Common myeloid progenitor, CD34-positive (primary cell): ENCODE measurements at regions of chr3 and their contacts with region 1.

Region 1: GRCh38 chr3:183122257-183122932 is 23.1 kb upstream of the MCCC1 start:
- DNase-seq: peak; percentile 58 to 82 (median 75)
- H3K4me3 ChIP-seq: no peak overlapping the region
- H3K27ac ChIP-seq: no peak overlapping the region
- H3K4me1 ChIP-seq: no peaks in the 10 kb centered on the region
- H3K27me3 ChIP-seq: no peaks in the 10 kb centered on the region

Region 2: DNA sequence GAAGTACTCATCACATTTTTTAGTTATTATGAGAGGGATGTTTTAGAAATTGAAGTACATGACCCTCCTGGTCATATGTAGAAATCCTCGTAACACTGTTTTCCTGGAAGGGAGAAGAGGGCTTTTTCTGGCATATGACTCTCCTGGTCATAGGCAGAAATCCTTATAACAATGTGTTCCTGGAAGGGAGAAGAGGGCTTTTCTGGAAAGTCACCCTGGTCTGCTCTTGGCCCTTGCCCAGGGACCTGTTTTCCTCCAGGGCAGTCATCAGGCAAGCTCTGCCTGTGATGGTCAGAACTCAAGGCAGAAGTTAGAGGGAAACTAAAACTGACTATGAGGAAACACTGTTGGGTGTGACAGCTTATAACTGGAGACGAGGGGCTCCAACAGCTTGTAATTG is 12.4 kb after region 1 on chr3:
- CTCF ChIA-PET with region 1: interaction called, 32 read pairs
- POLR2A ChIA-PET with region 1: no interaction called
- DNase-seq: no peak
- H3K4me3 ChIP-seq: no peak overlapping the region
- H3K27ac ChIP-seq: no peak overlapping the region
- H3K4me1 ChIP-seq: peaks cover 0 to 6% (median under 1%) of the 10 kb centered on the region in 4 experiments
- H3K27me3 ChIP-seq: no peaks in the 10 kb centered on the region

Region 3: GRCh38 chr3:183178629-183179549 is 56.5 kb after region 1 on chr3:
- CTCF ChIA-PET with region 1: interaction called, 64 read pairs
- POLR2A ChIA-PET with region 1: no interaction called
- DNase-seq: peak; percentile 54 to 80 (median 72)
- H3K4me3 ChIP-seq: peak overlapping the region; percentile 29 to 82 (median 58)
- H3K27ac ChIP-seq: no peak overlapping the region
- H3K4me1 ChIP-seq: peaks cover 0 to 19% (median 18%) of the 10 kb centered on the region in 4 experiments
- H3K27me3 ChIP-seq: peaks cover 0 to 30% (median 7%) of the 10 kb centered on the region in 5 experiments